HepG2 (cell line): ENCODE measurements at regions of chr4 and their contacts with region 1.

Region 1: DNA sequence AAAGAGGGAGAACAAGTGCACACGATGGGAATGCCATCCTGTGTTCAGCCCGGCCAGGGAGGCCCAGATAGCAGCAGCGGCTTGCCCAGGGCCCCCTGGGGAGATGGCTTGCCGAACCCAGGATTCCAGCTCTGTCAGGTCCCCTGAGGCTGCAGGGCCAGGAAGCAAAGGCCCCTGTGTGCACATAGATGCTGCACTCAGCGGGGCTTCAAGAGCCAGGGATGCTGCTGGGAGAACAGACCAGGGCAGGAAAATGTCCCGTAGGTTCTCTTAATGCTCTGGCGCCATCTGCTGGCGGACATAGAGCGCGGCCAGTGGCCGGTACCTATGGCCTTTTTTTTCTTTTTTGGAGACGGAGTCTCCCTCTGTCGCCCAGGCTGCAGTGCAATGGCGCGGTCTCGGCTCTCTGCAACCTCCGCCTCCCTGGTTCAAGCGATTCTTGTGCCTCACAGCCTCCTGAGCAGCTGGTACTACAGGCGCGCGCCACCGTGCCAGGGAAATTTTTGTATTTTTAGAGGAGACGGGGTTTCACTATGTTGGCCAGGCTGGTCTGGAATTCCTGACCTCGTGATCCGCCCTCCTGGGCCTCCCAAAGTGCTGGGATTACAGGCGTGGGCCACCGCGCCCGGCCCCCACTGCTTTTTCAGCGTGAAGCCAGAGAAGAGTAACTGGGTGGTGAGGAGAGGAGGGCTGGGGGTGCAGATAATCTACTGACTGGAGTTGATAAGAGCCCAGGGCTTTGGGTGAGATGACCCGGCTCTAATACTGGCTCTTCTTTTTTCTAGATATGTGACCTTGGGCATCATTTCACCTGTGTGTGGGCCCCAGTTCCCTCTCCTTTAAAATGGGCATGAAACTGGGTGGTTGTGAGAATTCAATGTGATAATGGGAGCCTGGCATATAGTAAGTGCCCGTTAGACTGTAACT is 22.5 kb downstream of the MED28 start:
- DNase-seq: peak; percentile 64
- ATAC-seq: peak; percentile 94
- H3K4me3 ChIP-seq: no peak overlapping the region
- H3K27ac ChIP-seq: no peak overlapping the region
- H3K4me1 ChIP-seq: peaks cover 9% of the 10 kb centered on the region; the same call in 1 of the 2 replicates
- H3K27me3 ChIP-seq: no peaks in the 10 kb centered on the region
- CTCF ChIP-seq: peak; percentile 89
- EP300 ChIP-seq: no peak
- POLR2A ChIP-seq: no peak
- RAD21 ChIP-seq: peak; percentile 91

Region 2: GRCh38 chr4:17597517-17597916 is 39.4 kb before region 1 on chr4:
- CTCF ChIA-PET with region 1: interaction called, 4 read pairs
- POLR2A ChIA-PET with region 1: no interaction called
- in situ Hi-C with region 1: no loop called
- intact Hi-C with region 1: loop called (anchors 1 kb)
- DNase-seq: no peak
- ATAC-seq: peak; percentile 92
- H3K4me3 ChIP-seq: no peak overlapping the region
- H3K27ac ChIP-seq: no peak overlapping the region
- H3K4me1 ChIP-seq: no peaks in the 10 kb centered on the region
- H3K27me3 ChIP-seq: no peaks in the 10 kb centered on the region
- CTCF ChIP-seq: peak; percentile 57
- EP300 ChIP-seq: no peak
- POLR2A ChIP-seq: no peak
- RAD21 ChIP-seq: peak; percentile 29; the same call in 1 of the 2 replicates

Region 3: DNA sequence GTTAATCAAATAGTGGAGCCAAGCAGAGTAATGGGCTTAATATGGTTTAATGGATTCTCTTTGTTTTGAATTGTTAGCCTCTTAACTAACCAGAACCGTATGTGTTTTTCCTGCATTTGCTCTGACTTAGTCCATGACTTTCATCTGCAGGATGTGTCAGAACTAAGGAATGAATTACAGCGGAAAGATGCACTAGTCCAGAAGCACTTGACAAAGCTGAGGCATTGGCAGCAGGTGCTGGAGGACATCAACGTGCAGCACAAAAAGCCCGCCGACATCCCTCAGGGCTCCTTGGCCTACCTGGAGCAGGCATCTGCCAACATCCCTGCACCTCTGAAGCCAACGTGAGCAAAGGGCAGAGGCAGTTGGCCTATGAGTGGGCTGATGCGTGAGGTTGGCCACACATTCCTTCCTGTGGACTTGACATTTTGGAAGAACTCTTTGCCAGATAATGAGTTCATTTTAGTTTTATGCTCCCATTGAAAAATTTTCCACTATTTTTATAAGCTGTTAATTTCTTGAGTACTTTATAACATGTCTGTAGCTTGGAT is 13.4 kb before region 1 on chr4:
- CTCF ChIA-PET with region 1: no interaction called
- POLR2A ChIA-PET with region 1: no interaction called
- in situ Hi-C with region 1: no loop called
- intact Hi-C with region 1: no loop called
- DNase-seq: no peak
- ATAC-seq: no peak
- H3K4me3 ChIP-seq: no peak overlapping the region
- H3K27ac ChIP-seq: no peak overlapping the region
- H3K4me1 ChIP-seq: peaks cover 13% of the 10 kb centered on the region
- H3K27me3 ChIP-seq: no peaks in the 10 kb centered on the region
- CTCF ChIP-seq: no peak
- EP300 ChIP-seq: no peak
- POLR2A ChIP-seq: no peak
- RAD21 ChIP-seq: no peak

Region 4: DNA sequence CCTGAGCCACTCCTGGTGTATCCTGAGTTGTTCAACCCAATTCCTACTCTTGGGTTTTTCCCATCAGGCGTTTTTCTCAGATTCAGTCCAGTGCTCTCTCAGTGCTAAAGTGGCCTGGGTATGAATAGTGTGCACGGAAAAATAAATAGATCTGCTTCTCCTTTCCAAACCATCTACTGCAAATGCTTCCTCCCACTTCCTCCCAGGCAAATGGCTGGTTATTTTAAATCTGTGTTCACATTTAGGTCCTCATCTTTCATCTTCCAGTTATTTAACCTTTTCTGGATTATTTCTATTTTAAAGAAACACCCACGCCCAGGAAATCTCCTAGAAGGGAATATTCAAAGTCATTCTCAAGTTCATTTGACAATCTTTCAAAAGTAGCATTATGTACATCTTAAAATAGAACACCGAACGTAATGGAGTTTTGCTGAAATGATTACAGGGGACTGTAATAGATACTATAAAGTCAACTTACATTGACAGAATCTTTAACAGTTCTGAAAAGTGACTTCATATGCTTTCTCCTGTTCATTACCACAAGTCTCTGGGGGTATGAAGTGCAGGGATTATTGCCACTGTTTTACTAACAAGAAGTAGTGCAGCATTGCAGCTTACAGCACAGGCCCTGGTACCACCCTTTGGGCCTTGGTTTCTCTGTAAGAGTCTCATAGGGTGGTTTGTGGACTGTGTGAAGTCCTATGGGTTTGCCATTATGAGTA is 43.8 kb after region 1 on chr4:
- CTCF ChIA-PET with region 1: no interaction called
- POLR2A ChIA-PET with region 1: no interaction called
- in situ Hi-C with region 1: no loop called
- intact Hi-C with region 1: no loop called
- DNase-seq: no peak
- ATAC-seq: no peak
- H3K4me3 ChIP-seq: no peak overlapping the region
- H3K27ac ChIP-seq: no peak overlapping the region
- H3K4me1 ChIP-seq: no peaks in the 10 kb centered on the region
- H3K27me3 ChIP-seq: no peaks in the 10 kb centered on the region
- CTCF ChIP-seq: no peak
- EP300 ChIP-seq: no peak
- POLR2A ChIP-seq: no peak
- RAD21 ChIP-seq: no peak